ENCODE measurements at regions of chr10 and their contacts with region 1.

Region 1: GRCh38 chr10:103752680-103753248 is 102.6 kb downstream of the SH3PXD2A start:
- DNase-seq: peak in 3 of 9 experiments; percentile 35 to 52 (median 48)
- ATAC-seq: no peak
- H3K4me3 ChIP-seq: no peak overlapping the region
- H3K4me3 Mint-ChIP-seq: no peak overlapping the region
- H3K27ac ChIP-seq: no peak overlapping the region
- H3K27ac Mint-ChIP-seq: no peak overlapping the region
- H3K4me1 ChIP-seq: peaks cover 3% of the 10 kb centered on the region
- H3K4me1 Mint-ChIP-seq: peaks cover 14% of the 10 kb centered on the region
- H3K27me3 ChIP-seq: no peaks in the 10 kb centered on the region
- H3K27me3 Mint-ChIP-seq: no peaks in the 10 kb centered on the region
- CTCF ChIP-seq: peak; percentile 90

Region 2: GRCh38 chr10:103648921-103649532 is 103.7 kb before region 1 on chr10:
- CTCF ChIA-PET with region 1: no interaction called
- POLR2A ChIA-PET with region 1: no interaction called
- intact Hi-C with region 1: no loop called
- DNase-seq: no peak
- ATAC-seq: no peak
- H3K4me3 ChIP-seq: no peak overlapping the region
- H3K4me3 Mint-ChIP-seq: no peak overlapping the region
- H3K27ac ChIP-seq: no peak overlapping the region
- H3K27ac Mint-ChIP-seq: no peak overlapping the region
- H3K4me1 ChIP-seq: no peaks in the 10 kb centered on the region
- H3K4me1 Mint-ChIP-seq: peaks cover 2% of the 10 kb centered on the region
- H3K27me3 ChIP-seq: no peaks in the 10 kb centered on the region
- H3K27me3 Mint-ChIP-seq: no peaks in the 10 kb centered on the region
- CTCF ChIP-seq: no peak

Region 3: DNA sequence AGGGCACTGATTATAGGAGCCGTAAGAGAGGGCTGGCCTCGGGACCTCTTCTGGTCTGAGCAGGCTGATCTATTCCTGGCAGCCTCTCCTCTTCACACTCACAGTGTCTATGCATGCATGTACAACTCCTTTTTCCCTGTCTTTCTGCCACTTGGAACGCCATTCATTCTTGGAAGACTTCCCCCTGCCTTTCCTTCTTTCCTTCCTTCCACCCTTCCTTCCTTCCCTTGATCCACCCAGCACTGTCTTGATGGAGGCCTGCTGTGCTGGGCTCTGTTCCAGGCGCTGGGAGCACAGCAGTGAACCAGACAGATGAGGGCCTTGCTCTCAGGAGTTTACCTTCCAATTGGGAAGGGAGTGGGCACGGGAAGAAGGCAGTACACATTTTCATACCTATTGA is 12.2 kb before region 1 on chr10:
- CTCF ChIA-PET with region 1: interaction called, 11 read pairs
- POLR2A ChIA-PET with region 1: no interaction called
- intact Hi-C with region 1: no loop called
- DNase-seq: no peak
- ATAC-seq: no peak
- H3K4me3 ChIP-seq: no peak overlapping the region
- H3K4me3 Mint-ChIP-seq: no peak overlapping the region
- H3K27ac ChIP-seq: no peak overlapping the region
- H3K27ac Mint-ChIP-seq: no peak overlapping the region
- H3K4me1 ChIP-seq: no peaks in the 10 kb centered on the region
- H3K4me1 Mint-ChIP-seq: peaks cover under 1% of the 10 kb centered on the region
- H3K27me3 ChIP-seq: no peaks in the 10 kb centered on the region
- H3K27me3 Mint-ChIP-seq: no peaks in the 10 kb centered on the region
- CTCF ChIP-seq: no peak

Region 4: GRCh38 chr10:103763374-103764202 is 10.8 kb after region 1 on chr10:
- CTCF ChIA-PET with region 1: interaction called, 7 read pairs
- POLR2A ChIA-PET with region 1: interaction called, 11 read pairs
- intact Hi-C with region 1: no loop called
- DNase-seq: peak in 5 of 9 experiments; percentile 16 to 62 (median 40)
- ATAC-seq: peak; percentile 16
- H3K4me3 ChIP-seq: peak overlapping the region; percentile 7 to 21
- H3K4me3 Mint-ChIP-seq: peak overlapping the region; percentile 51
- H3K27ac ChIP-seq: peak overlapping the region in 1 of 2 experiments; percentile 28
- H3K27ac Mint-ChIP-seq: peak overlapping the region; percentile 83
- H3K4me1 ChIP-seq: peaks cover 60% of the 10 kb centered on the region
- H3K4me1 Mint-ChIP-seq: peaks cover 75% of the 10 kb centered on the region
- H3K27me3 ChIP-seq: no peaks in the 10 kb centered on the region
- H3K27me3 Mint-ChIP-seq: no peaks in the 10 kb centered on the region
- CTCF ChIP-seq: no peak

Region 5: GRCh38 chr10:103859161-103860086 is 106.7 kb after region 1 on chr10:
- CTCF ChIA-PET with region 1: interaction called, 12 read pairs
- POLR2A ChIA-PET with region 1: no interaction called
- intact Hi-C with region 1: no loop called
- DNase-seq: peak; percentile 29 to 70 (median 54)
- ATAC-seq: peak; percentile 67
- H3K4me3 ChIP-seq: no peak overlapping the region
- H3K4me3 Mint-ChIP-seq: no peak overlapping the region
- H3K27ac ChIP-seq: no peak overlapping the region
- H3K27ac Mint-ChIP-seq: no peak overlapping the region
- H3K4me1 ChIP-seq: peaks cover 7% of the 10 kb centered on the region
- H3K4me1 Mint-ChIP-seq: peaks cover 9% of the 10 kb centered on the region
- H3K27me3 ChIP-seq: peaks cover 0 to 7% of the 10 kb centered on the region in 2 experiments
- H3K27me3 Mint-ChIP-seq: peaks cover 17% of the 10 kb centered on the region
- CTCF ChIP-seq: peak; percentile 67

Measured in CD8-positive, alpha-beta T cell (primary cell).